HCT116 (cell line): ENCODE measurements at regions of chr11 and their contacts with region 1.

Region 1: DNA sequence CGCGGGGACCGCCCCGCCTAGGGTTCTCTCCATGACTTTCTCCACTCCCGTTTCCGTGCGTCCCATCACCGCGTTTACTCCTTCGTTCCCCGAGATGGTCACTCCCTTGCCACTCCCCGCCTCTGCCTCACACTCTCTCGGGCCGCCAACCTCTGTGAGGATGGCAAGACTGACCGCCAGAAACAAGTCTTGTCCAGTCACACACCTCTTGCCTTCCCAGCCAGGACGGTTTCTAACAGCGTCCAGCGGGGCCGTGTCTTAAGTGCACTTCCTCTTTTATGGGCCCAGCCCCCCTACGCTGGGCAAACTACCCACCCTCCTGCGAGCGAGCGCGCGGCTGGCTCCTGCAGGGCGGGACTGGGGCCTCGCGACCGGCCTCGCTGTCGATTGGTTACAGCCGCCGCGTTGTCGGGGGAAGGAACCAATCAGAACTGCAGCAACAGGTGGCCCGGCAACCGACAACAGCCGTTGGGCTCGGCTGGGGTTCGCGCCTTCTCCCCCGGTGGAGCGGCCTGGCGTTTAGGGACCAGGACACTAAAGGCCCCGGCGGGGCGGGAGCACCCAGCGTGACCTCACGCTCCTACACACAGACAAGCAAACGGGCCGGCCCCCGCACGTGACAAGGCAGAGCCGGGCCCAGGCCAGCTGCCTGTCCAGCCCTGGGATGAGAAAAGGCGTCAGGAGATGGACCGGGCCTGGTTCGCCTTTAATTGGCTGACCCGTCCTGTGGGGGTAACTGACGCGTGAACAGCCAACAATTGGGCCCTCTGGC is 512 bp upstream of the UCP2 start:
- DNase-seq: peak; percentile 83
- ATAC-seq: peak; percentile 90
- H3K4me3 ChIP-seq: peak overlapping the region; percentile 57 to 66
- H3K27ac ChIP-seq: peak overlapping the region; percentile 85
- H3K4me1 ChIP-seq: peaks cover 16 to 37% of the 10 kb centered on the region in 2 experiments
- H3K27me3 ChIP-seq: no peaks in the 10 kb centered on the region
- CTCF ChIP-seq: no peak
- POLR2A ChIP-seq: peak; percentile 36
- RAD21 ChIP-seq: no peak

Region 2: GRCh38 chr11:74170694-74171629 is 187.8 kb after region 1 on chr11 and contains the starts of genes C2CD3 and PPME1:
- CTCF ChIA-PET with region 1: no interaction called
- POLR2A ChIA-PET with region 1: no interaction called
- RAD21 ChIA-PET with region 1: interaction called, 5 to 6 read pairs
- intact Hi-C with region 1: loop called (anchors 5 kb)
- DNase-seq: peak; percentile 99
- ATAC-seq: peak; percentile 95
- H3K4me3 ChIP-seq: peak within 1 kb of the TSS; percentile 86 to 94
- H3K27ac ChIP-seq: peak within 1 kb of the TSS; percentile 66
- H3K4me1 ChIP-seq: peaks cover 12 to 18% of the 10 kb centered on the region in 2 experiments; a peak in 2 of 4 replicates
- H3K27me3 ChIP-seq: no peaks in the 10 kb centered on the region
- CTCF ChIP-seq: no peak
- POLR2A ChIP-seq: peak; percentile 69
- RAD21 ChIP-seq: peak; percentile 54
- total RNA-seq, gene C2CD3: 30.6 TPM
- total RNA-seq, gene PPME1: 68.3 TPM